Kidney (tissue), 22 donors: ENCODE measurements at regions of chr1 and their contacts with region 1.

Region 1: DNA sequence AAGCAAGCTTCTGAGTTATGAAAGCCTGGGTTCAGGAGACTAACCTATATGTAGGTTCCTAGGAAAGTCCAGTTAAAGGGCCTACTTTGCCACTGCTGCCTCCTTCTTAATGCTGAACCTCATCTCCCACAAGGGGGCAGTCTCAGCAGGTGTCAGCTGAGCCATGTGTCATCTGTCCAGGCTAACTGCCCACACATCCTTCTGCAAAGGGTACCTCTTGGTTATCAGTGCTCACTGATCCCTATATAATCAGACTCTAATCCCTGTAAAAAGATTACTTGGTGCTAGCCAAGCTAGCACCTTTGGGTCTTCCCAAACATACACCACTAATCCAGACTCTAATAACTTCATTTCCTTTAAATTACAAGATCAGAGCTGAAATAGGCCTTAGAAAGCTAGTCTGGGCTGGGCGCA is 9.0 kb downstream of the PRDX1 start:
- DNase-seq: peak in 4 of 5 donors; percentile 61 to 82 (median 65)
- H3K4me3 ChIP-seq: no peak overlapping the region
- H3K27ac ChIP-seq: no peak overlapping the region
- H3K4me1 ChIP-seq: peaks cover 0 to 9% (median 0%) of the 10 kb centered on the region in 3 donors
- H3K27me3 ChIP-seq: no peaks in the 10 kb centered on the region
- CTCF ChIP-seq: peak; percentile 70

Region 2: GRCh38 chr1:45569962-45570581 is 57.4 kb after region 1 on chr1:
- intact Hi-C with region 1: loop called (anchors 10 kb)
- DNase-seq: peak in 4 of 5 donors; percentile 73 to 83 (median 77)
- H3K4me3 ChIP-seq: no peak overlapping the region
- H3K27ac ChIP-seq: no peak overlapping the region
- H3K4me1 ChIP-seq: peaks cover 0 to 6% (median 0%) of the 10 kb centered on the region in 3 donors
- H3K27me3 ChIP-seq: no peaks in the 10 kb centered on the region
- CTCF ChIP-seq: peak; percentile 99